Caco-2 (cell line): ENCODE measurements at regions of chr10 and their contacts with region 1.

Region 1: DNA sequence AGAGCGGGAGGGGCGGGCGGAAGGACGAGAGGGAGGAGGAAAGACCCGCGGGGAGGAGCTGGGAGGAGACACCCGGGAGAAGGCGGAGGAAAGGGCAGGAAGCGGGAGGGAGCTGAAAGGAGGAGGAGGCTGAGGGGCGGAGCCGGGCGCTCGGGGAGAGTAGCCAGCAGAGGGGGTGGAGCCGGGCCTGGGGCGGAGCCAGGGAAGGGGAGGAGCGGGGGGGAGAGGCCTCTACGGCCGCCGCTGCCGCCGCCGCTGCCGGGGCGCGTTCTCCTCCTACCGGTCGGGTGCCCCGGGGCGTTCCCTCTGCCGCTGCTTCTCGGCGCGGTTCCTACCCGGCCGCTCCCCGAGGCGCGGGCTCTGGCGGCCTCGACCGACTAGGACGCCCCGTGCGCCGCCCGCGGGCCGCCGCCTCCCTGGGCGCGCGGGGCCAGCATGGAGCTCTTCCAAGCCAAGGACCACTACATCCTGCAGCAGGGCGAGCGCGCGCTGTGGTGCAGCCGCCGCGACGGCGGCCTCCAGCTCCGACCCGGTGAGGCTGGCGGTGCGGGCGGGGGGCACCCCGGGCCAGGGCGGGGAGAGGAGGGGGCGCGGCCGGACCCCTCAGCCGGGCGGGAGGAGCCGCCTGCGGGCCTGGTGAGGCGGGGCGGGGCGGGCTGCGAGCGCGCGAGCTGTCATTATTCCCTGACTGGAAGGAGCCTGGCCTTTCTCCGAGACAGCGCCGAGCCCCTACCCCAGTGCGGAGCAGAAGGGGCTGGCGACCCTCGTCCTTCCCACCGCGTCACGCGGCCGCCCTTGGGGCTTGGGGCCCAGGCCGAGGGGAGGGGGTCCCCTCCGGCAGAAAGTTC is at the start of gene INPP5F:
- DNase-seq: peak; percentile 100
- H3K4me3 ChIP-seq: peak within 1 kb of the TSS; percentile 82
- H3K4me3 Mint-ChIP-seq: peak within 1 kb of the TSS; percentile 91
- H3K27ac Mint-ChIP-seq: peak within 1 kb of the TSS; percentile 90
- H3K4me1 ChIP-seq: peaks cover 40% of the 10 kb centered on the region
- H3K4me1 Mint-ChIP-seq: peaks cover 47% of the 10 kb centered on the region
- H3K27me3 ChIP-seq: no peaks in the 10 kb centered on the region
- H3K27me3 Mint-ChIP-seq: no peaks in the 10 kb centered on the region
- CTCF ChIP-seq: peak in 1 of 2 experiments; percentile 24
- total RNA-seq, gene INPP5F: 26.4 and 26.9 TPM in 2 replicates

Region 2: DNA sequence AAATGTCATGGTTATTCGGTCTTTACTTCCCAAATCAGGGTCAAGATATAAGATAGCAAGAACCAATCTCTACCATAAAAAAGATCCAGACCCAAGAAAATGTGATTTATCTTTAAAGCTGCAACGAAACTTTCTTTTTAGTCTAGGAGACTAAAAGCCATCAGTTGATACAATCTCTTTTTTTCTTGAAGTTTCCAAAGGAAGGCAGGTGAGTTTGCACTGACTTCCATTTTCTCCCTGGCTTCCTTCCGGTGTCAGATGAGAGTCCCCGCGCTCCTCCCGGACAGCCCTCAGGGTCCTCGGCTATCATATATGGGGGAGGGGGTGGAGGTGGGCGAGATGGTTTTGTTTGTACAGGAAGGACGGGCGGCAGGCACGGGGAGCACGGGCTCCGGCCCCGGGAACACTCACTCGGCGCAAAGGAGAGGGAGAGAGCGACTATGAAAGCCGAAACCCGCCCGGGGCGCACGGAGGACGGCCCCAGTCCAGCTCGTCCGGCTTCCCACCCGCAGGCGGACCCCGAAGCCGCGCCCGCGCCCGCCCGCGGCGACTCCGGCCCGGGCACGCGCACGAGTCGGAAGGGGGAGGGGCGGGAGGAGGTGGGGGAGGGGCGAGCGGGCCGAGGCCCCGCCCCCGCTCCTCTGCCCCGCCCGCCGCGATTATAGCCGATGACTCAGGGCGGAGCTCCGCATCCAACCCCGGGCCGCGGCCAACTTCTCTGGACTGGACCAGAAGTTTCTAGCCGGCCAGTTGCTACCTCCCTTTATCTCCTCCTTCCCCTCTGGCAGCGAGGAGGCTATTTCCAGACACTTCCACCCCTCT is 75.1 kb before region 1 on chr10 and contains the start of gene BAG3:
- CTCF ChIA-PET with region 1: no interaction called
- POLR2A ChIA-PET with region 1: interaction called, 25 read pairs
- intact Hi-C with region 1: loop called (anchors 2 kb)
- DNase-seq: peak; percentile 90
- H3K4me3 ChIP-seq: peak within 1 kb of the TSS; percentile 78
- H3K4me3 Mint-ChIP-seq: peak within 1 kb of the TSS; percentile 90
- H3K27ac Mint-ChIP-seq: peak within 1 kb of the TSS; percentile 89
- H3K4me1 ChIP-seq: peaks cover 13% of the 10 kb centered on the region
- H3K4me1 Mint-ChIP-seq: peaks cover 13% of the 10 kb centered on the region
- H3K27me3 ChIP-seq: no peaks in the 10 kb centered on the region
- H3K27me3 Mint-ChIP-seq: no peaks in the 10 kb centered on the region
- CTCF ChIP-seq: no peak
- total RNA-seq, gene BAG3: 30.7 and 31.6 TPM in 2 replicates

Region 3: GRCh38 chr10:119737827-119738226 is 11.8 kb after region 1 on chr10:
- CTCF ChIA-PET with region 1: interaction called, 18 read pairs
- POLR2A ChIA-PET with region 1: interaction called, 31 read pairs
- intact Hi-C with region 1: loop called (anchors 1 kb)
- DNase-seq: peak; percentile 52 to 60
- H3K4me3 ChIP-seq: no peak overlapping the region
- H3K4me3 Mint-ChIP-seq: peak overlapping the region; percentile 40
- H3K27ac Mint-ChIP-seq: peak overlapping the region; percentile 90
- H3K4me1 ChIP-seq: peaks cover 64% of the 10 kb centered on the region
- H3K4me1 Mint-ChIP-seq: peaks cover 34% of the 10 kb centered on the region
- H3K27me3 ChIP-seq: no peaks in the 10 kb centered on the region
- H3K27me3 Mint-ChIP-seq: no peaks in the 10 kb centered on the region
- CTCF ChIP-seq: no peak

Region 4: DNA sequence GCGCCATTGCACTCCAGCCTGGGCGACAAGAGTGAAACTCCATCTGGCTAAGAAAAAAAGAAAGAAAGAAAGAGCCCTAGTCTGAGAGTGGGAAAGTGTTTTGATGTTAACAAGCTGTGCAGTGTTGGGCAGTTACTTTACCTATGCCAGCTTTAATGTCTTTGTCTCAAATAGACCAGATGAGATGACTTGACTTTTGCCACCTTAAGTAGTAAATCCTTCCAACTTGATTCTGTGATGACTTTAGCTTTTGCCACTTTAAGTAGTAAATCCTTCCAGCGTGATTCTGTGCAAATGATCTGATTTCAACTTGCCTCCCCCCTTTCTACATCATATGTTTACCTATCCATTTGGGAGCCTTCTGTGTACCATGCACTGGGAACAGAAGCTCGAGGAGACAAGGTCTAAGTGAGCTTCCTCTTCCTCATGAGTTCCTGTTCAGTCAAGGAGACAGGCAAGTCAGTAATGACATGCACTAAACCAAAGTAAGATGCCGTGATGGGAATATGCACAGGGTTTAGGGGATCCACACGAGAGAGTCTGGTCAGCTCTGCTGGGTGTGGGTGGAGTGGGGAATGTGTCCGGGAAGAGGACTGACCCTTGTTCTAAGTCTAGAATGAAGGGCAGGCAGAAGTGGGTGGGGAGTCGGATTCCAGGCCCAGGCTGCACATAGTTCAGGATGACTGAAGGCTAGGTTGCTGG is 17.0 kb after region 1 on chr10:
- CTCF ChIA-PET with region 1: interaction called, 18 read pairs
- POLR2A ChIA-PET with region 1: interaction called, 31 read pairs
- intact Hi-C with region 1: loop called (anchors 1 kb)
- DNase-seq: peak; percentile 83 to 93
- H3K4me3 ChIP-seq: peak overlapping the region; percentile 17
- H3K4me3 Mint-ChIP-seq: peak overlapping the region; percentile 62
- H3K27ac Mint-ChIP-seq: peak overlapping the region; percentile 79
- H3K4me1 ChIP-seq: peaks cover 60% of the 10 kb centered on the region
- H3K4me1 Mint-ChIP-seq: peaks cover 47% of the 10 kb centered on the region
- H3K27me3 ChIP-seq: no peaks in the 10 kb centered on the region
- H3K27me3 Mint-ChIP-seq: no peaks in the 10 kb centered on the region
- CTCF ChIP-seq: no peak